ENCODE measurements at regions of chr14 and their contacts with region 1.

Region 1: DNA sequence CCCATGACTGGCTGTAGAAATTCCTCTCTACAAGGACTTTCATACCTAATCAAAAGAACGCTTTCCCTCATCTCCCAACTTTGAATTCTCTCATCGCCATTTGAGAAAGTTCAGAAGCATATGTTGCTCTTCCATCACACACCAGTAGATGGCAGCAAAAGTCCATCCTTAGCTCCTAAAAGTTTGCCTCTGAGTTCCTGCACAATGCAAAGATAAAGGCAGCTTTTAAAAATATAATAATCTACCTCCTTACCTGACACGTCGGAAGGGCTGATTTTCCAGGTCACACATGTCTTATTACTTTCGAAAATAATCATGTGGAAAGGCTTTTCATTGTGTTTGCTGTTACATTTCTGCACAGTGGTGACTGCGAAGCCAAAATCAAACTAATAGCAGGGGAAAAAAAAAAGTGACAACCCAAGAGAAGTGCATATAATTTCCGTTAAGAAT is 456.7 kb upstream of the SEL1L start:
- DNase-seq: peak; percentile 71
- H3K4me3 Mint-ChIP-seq: no peak overlapping the region
- H3K27ac Mint-ChIP-seq: no peak overlapping the region
- H3K4me1 Mint-ChIP-seq: peaks cover 5% of the 10 kb centered on the region
- H3K27me3 Mint-ChIP-seq: no peaks in the 10 kb centered on the region
- CTCF ChIP-seq: peak; percentile 80

Region 2: DNA sequence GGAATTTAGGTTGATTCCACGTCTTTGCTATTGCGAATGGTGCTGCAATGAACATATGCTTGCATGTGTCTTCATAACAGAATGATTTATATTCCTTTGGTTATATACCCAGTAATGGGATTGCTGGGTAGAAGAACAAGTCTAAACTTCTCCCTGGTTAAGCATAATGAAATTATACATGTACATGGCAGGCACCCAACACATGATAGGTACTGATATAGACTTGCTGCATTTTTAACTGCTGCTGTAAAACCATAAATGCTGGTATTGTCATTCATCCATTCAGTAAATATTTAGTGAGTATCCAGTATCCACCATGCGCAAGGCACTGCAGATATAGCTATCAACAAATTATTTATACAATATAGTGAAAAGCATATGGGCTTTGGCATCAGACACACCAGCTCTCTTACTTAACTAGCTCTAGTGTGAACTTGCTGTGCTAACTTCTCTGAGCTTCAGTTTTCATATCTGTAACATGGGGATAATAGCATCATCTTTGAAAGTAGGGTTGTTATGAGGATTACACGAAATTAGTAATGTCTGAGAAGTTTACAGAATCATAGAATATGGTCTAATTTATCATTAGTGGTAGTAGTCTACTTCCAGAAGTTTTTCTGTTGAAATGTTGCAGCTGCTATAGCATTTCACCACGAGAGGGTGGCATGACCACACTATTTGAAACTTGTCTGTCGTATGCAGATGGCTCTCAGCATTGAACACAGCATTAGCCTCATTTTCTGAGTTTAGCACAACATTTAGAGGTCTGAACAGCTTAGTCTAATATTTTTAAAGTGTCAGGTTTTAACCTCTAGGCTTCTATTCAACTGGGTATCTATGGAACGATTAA is 424.7 kb before region 1 on chr14:
- CTCF ChIA-PET with region 1: interaction called, 10 read pairs
- POLR2A ChIA-PET with region 1: no interaction called
- intact Hi-C with region 1: loop called (anchors 1 kb)
- DNase-seq: peak; percentile 48
- H3K4me3 Mint-ChIP-seq: no peak overlapping the region
- H3K27ac Mint-ChIP-seq: no peak overlapping the region
- H3K4me1 Mint-ChIP-seq: peaks cover 6% of the 10 kb centered on the region
- H3K27me3 Mint-ChIP-seq: peaks cover 31% of the 10 kb centered on the region
- CTCF ChIP-seq: peak; percentile 60

Region 3: GRCh38 chr14:81710234-81710845 is 280.0 kb before region 1 on chr14:
- CTCF ChIA-PET with region 1: interaction called, 9 read pairs
- POLR2A ChIA-PET with region 1: no interaction called
- intact Hi-C with region 1: loop called (anchors 2 kb)
- DNase-seq: peak; percentile 63
- H3K4me3 Mint-ChIP-seq: no peak overlapping the region
- H3K27ac Mint-ChIP-seq: no peak overlapping the region
- H3K4me1 Mint-ChIP-seq: no peaks in the 10 kb centered on the region
- H3K27me3 Mint-ChIP-seq: no peaks in the 10 kb centered on the region
- CTCF ChIP-seq: peak; percentile 72

Region 4: GRCh38 chr14:82052778-82053177 is 62.4 kb after region 1 on chr14:
- CTCF ChIA-PET with region 1: interaction called, 21 read pairs
- POLR2A ChIA-PET with region 1: no interaction called
- intact Hi-C with region 1: no loop called
- DNase-seq: no peak
- H3K4me3 Mint-ChIP-seq: no peak overlapping the region
- H3K27ac Mint-ChIP-seq: no peak overlapping the region
- H3K4me1 Mint-ChIP-seq: peaks cover 8% of the 10 kb centered on the region
- H3K27me3 Mint-ChIP-seq: no peaks in the 10 kb centered on the region
- CTCF ChIP-seq: no peak

Region 5: GRCh38 chr14:83294941-83295340 is 1304.6 kb after region 1 on chr14:
- CTCF ChIA-PET with region 1: interaction called, 5 read pairs
- POLR2A ChIA-PET with region 1: no interaction called
- intact Hi-C with region 1: loop called (anchors 10 kb)
- DNase-seq: no peak
- H3K4me3 Mint-ChIP-seq: no peak overlapping the region
- H3K27ac Mint-ChIP-seq: peak overlapping the region; percentile 71
- H3K4me1 Mint-ChIP-seq: peaks cover 10% of the 10 kb centered on the region
- H3K27me3 Mint-ChIP-seq: no peaks in the 10 kb centered on the region
- CTCF ChIP-seq: no peak

Measured in MCF 10A (cell line).